MCF 10A (cell line): ENCODE measurements at regions of chr7 and their contacts with region 1.

Region 1: GRCh38 chr7:128883622-128884501 is 21.2 kb downstream of the ATP6V1F start:
- DNase-seq: peak; percentile 76
- H3K4me3 Mint-ChIP-seq: no peak overlapping the region
- H3K27ac Mint-ChIP-seq: no peak overlapping the region
- H3K4me1 Mint-ChIP-seq: no peaks in the 10 kb centered on the region
- H3K27me3 Mint-ChIP-seq: no peaks in the 10 kb centered on the region
- CTCF ChIP-seq: peak; percentile 90

Region 2: DNA sequence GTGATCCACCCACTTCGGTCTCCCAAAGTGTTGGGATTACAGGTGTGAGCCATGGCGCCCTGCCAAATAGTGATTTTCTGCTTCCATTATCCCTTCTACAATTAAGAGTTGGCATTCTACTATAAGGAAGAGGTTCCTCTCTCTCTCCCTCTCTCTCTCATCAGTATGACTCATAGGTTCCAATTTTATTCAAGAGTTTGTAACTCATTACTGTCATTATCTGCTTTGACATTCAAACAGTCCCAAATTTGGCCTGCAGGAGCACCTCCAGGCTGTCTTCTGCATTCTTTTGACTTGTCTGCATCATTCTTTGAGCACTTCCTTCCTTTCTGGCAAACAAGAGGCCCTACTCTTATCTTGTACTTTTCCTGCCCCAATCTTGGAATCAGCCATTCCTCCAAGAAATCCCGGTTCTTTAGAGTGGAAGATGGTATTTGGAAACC is 177.9 kb before region 1 on chr7:
- CTCF ChIA-PET with region 1: no interaction called
- POLR2A ChIA-PET with region 1: no interaction called
- intact Hi-C with region 1: no loop called
- DNase-seq: peak; percentile 5
- H3K4me3 Mint-ChIP-seq: no peak overlapping the region
- H3K27ac Mint-ChIP-seq: no peak overlapping the region
- H3K4me1 Mint-ChIP-seq: peaks cover 20% of the 10 kb centered on the region
- H3K27me3 Mint-ChIP-seq: no peaks in the 10 kb centered on the region
- CTCF ChIP-seq: no peak

Region 3: DNA sequence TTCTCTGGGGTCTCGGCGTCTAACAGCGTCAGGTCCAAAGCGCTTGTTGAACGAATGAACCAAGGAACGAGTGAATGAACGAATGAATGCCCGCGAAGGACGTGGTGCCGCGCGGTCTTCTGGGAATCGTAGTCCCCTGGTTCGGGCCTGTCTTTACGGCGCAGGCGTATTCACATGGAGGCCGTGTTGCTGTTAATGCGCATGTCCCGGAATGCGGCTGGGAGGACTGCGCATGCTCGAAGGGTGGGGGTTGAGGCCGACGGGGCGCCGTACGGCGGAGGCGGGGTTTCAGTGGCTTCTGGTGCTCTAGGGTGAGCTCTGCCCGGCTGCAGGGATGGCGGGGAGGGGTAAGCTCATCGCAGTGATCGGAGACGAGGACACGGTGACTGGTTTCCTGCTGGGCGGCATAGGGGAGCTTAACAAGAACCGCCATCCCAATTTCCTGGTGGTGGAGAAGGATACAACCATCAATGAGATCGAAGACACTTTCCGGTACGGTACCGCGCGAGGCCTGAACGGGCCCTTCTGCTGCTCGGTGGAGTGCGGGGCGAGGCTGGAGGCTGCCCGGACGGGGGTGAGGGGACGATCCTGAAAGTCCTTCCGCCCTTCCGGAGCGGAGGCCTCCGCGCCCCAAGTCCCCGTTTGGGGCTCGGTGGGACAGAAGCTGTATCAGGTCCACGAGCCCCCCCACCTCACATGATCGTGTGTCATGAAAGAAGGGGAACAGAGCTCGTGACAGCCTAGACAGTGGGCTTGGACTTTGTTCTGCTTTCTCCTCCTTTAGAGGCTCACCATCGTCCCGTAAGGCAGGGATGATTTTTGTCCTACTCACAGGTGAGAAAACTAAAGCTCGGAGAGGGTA is 21.1 kb before region 1 on chr7 and contains the start of gene ATP6V1F:
- CTCF ChIA-PET with region 1: interaction called, 32 read pairs
- POLR2A ChIA-PET with region 1: interaction called, 5 read pairs
- intact Hi-C with region 1: no loop called
- DNase-seq: peak; percentile 98
- H3K4me3 Mint-ChIP-seq: peak within 1 kb of the TSS; percentile 82
- H3K27ac Mint-ChIP-seq: peak within 1 kb of the TSS; percentile 84
- H3K4me1 Mint-ChIP-seq: peaks cover 14% of the 10 kb centered on the region
- H3K27me3 Mint-ChIP-seq: no peaks in the 10 kb centered on the region
- CTCF ChIP-seq: no peak
- total RNA-seq, gene ATP6V1F: 125 and 152 TPM in 2 replicates

Region 4: DNA sequence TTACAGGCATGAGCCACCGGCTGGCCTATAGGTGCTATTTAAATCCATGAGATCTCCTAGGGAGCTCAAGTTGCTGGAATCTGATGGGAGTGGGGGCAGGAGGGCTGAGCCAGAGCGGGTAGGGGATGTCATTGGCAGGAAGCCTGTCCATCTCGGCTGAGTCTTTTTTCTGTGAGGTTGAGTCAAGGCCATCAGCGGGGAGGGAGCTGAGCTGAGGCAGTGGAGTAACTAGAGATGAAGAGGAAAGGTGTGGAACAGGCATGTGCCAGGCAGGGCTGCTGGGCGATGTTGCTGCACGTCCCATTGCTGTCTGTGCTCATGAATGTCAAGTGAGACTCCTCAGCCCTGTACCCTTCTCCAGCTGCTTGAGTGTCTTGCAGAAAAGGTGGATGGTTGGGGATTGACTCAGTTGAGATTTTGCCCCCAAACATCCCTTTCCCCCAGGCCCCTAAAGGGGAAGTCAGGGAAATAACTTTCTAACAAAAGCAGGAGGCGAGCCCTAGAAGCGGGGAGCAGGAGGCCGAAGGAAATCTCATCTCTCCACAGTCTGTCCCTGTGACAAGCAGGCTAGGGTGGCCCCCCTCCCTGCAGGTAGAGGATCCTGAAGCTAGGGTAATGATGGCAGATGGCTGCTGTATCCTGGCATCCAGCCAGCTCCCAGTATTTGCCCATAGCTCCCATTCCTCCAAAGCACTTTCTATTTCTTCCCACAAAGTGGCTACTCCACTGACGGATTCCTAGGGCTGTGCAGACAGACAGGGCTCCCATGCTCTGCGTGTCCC is 15.8 kb before region 1 on chr7:
- CTCF ChIA-PET with region 1: interaction called, 32 read pairs
- POLR2A ChIA-PET with region 1: interaction called, 5 read pairs
- intact Hi-C with region 1: no loop called
- DNase-seq: peak; percentile 23
- H3K4me3 Mint-ChIP-seq: peak overlapping the region; percentile 39
- H3K27ac Mint-ChIP-seq: no peak overlapping the region
- H3K4me1 Mint-ChIP-seq: peaks cover 8% of the 10 kb centered on the region
- H3K27me3 Mint-ChIP-seq: no peaks in the 10 kb centered on the region
- CTCF ChIP-seq: no peak